ENCODE measurements at regions of chr5 and their contacts with region 1.

Region 1: DNA sequence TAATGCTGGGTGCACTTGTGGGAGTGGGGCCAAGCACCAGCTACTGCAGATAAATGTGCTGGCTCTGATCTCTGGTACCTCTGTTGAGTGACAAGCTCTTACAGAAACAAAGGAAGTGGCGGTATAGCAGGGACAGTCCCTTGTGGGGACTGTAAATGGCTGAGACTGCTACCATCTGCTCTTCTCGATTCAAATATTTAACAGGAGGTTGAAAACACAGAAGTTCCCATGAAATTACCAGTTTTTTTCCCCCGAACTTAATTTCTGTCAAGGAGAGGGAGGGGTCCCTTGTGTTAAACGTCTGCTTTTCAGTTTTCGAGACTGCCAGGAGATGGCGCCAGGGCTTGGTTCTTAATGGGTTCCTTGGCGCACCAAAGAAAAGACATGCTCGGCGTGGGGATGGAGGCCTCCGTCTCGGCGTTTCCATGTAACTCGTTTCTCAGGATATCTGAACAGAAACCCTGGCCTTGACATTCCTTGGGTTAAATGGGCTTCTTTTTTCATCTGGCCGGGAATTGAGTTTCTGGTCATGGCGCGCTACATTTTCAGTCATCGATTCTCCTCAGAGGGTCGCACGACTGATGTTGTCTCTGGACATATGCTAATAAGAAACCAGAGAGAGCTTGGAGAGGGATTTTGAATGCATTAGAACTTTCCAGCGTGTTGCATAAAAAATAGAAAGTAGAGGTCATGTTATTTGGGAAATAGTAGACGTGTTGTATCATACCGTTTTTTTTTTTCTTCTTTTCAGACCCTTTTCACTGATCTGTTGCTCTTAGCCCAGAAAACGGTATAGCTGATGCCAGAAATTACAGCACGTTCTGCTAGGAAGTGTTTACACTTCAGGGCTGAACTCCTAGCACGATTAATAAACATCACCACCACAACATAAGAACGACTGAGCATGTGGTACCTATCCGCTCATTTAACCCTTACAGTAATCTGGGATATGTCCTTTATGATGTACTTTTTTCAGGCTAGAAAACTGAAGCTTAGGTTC is 64.0 kb downstream of the CARTPT start:
- DNase-seq: peak; percentile 54 to 89
- H3K4me3 ChIP-seq: no peak overlapping the region
- H3K27ac ChIP-seq: no peak overlapping the region
- H3K4me1 ChIP-seq: peaks cover 0 to 6% (median 4%) of the 10 kb centered on the region in 4 experiments; a peak in 5 of 7 replicates
- H3K27me3 ChIP-seq: no peaks in the 10 kb centered on the region
- CTCF ChIP-seq: peak; percentile 64 to 80 (median 79)
- EP300 ChIP-seq: no peak
- POLR2A ChIP-seq: no peak
- RAD21 ChIP-seq: peak; percentile 93 to 96

Region 2: DNA sequence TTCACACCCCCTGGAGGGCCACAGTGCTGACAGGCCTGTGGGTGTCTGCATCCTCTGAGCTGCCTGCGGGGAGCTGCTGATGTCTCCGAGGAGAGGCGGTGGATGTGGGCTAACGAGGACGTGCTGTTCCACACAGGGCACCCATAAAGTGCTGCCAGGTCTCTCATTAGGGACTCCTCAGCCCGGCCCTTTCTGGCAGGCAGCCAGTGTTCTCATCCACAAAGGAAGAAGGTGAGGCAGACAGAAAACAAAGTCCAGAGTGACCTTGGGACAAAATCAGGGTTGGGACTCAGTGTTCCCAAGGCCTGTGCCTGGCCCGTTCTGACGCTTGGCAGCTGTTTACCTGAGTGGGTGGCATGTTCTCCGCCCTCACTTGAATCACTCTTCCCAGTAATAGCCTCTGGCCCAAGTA is 34.7 kb before region 1 on chr5:
- CTCF ChIA-PET with region 1: no interaction called
- POLR2A ChIA-PET with region 1: no interaction called
- DNase-seq: no peak
- H3K4me3 ChIP-seq: no peak overlapping the region
- H3K27ac ChIP-seq: no peak overlapping the region
- H3K4me1 ChIP-seq: no peaks in the 10 kb centered on the region
- H3K27me3 ChIP-seq: no peaks in the 10 kb centered on the region
- CTCF ChIP-seq: no peak
- EP300 ChIP-seq: no peak
- POLR2A ChIP-seq: no peak
- RAD21 ChIP-seq: no peak

Region 3: DNA sequence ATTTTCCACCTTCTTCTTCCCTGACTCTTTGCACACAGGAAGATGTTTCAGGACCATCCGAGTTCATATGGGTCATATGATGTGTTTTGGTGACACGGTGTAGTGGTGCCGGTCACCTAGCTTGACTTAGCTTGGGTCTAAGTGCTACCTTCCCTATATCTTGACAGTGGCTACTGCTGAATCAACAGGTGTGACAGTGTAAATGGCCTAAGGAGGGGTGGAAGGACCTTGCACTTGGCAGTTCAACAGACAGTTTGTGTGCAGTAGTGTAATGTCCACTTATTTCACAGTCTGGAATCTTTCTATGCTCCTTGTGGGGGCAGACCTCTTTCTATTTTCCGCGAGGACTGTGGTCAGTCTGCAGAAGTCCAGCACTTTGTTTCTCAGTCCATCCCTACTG is 20.2 kb before region 1 on chr5:
- CTCF ChIA-PET with region 1: no interaction called
- POLR2A ChIA-PET with region 1: no interaction called
- DNase-seq: no peak
- H3K4me3 ChIP-seq: no peak overlapping the region
- H3K27ac ChIP-seq: no peak overlapping the region
- H3K4me1 ChIP-seq: no peaks in the 10 kb centered on the region; a peak in 1 of 7 replicates
- H3K27me3 ChIP-seq: no peaks in the 10 kb centered on the region
- CTCF ChIP-seq: no peak
- EP300 ChIP-seq: no peak
- POLR2A ChIP-seq: no peak
- RAD21 ChIP-seq: no peak

Region 4: DNA sequence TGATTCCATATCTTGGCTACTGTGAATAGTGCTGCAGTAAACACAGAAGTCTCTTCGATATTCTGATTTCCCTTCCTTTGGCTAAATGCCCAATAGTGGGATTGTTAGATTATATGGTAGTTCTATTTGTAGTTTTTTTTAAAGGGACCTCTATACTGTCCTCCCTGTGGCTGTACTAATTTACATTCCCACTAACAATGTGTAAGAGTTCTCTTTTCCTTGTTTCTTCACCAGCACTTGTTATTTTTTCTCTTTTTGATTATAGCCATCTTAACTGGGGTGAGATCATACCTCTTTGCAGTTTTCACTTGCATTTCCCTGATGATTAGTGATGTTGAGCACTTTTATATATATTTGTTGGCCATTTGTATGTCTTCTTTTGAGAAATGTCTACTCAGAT is 38.0 kb after region 1 on chr5:
- CTCF ChIA-PET with region 1: no interaction called
- POLR2A ChIA-PET with region 1: no interaction called
- DNase-seq: no peak
- H3K4me3 ChIP-seq: no peak overlapping the region
- H3K27ac ChIP-seq: no peak overlapping the region
- H3K4me1 ChIP-seq: no peaks in the 10 kb centered on the region
- H3K27me3 ChIP-seq: peaks cover 0 to 2% (median 0%) of the 10 kb centered on the region in 4 experiments; a peak in 1 of 7 replicates
- CTCF ChIP-seq: no peak
- EP300 ChIP-seq: no peak
- POLR2A ChIP-seq: no peak
- RAD21 ChIP-seq: no peak

Region 5: GRCh38 chr5:71838286-71838685 is 55.2 kb after region 1 on chr5:
- CTCF ChIA-PET with region 1: interaction called, 10 read pairs
- POLR2A ChIA-PET with region 1: no interaction called
- DNase-seq: no peak
- H3K4me3 ChIP-seq: no peak overlapping the region
- H3K27ac ChIP-seq: no peak overlapping the region
- H3K4me1 ChIP-seq: no peaks in the 10 kb centered on the region
- H3K27me3 ChIP-seq: peaks cover 0 to 1% (median 0%) of the 10 kb centered on the region in 4 experiments; a peak in 2 of 7 replicates
- CTCF ChIP-seq: no peak
- EP300 ChIP-seq: no peak
- POLR2A ChIP-seq: no peak
- RAD21 ChIP-seq: no peak

Region 6: DNA sequence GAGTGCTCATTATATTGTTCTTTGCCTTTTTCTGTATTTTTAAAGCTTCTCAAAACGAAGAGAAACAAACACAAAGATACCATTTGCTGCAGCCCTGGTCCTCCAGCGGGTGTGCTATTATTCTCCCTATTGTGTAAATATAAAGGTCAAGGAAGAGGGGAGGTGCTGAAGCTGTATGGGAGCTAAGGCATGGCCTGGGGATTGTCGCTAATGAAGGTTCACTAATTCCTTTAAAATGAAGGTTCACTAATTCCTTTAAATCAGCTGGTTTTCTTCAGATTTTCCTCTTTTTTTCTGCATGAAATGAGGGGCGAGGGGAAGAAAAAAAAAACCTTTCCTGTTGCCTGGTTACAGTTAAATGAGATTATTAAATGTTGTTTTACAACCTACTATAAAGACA is 249.7 kb after region 1 on chr5:
- CTCF ChIA-PET with region 1: interaction called, 10 read pairs
- POLR2A ChIA-PET with region 1: no interaction called
- DNase-seq: no peak
- H3K4me3 ChIP-seq: peak overlapping the region in 1 of 4 experiments; percentile 20; a peak in 1 of 8 replicates
- H3K27ac ChIP-seq: no peak overlapping the region
- H3K4me1 ChIP-seq: peaks cover 0 to 22% (median 13%) of the 10 kb centered on the region in 4 experiments
- H3K27me3 ChIP-seq: no peaks in the 10 kb centered on the region; a peak in 1 of 7 replicates
- CTCF ChIP-seq: no peak
- EP300 ChIP-seq: no peak
- POLR2A ChIP-seq: no peak
- RAD21 ChIP-seq: no peak; a peak in 1 of 4 replicates